ENCODE measurements at regions of chr4 and their contacts with region 1.

Region 1: DNA sequence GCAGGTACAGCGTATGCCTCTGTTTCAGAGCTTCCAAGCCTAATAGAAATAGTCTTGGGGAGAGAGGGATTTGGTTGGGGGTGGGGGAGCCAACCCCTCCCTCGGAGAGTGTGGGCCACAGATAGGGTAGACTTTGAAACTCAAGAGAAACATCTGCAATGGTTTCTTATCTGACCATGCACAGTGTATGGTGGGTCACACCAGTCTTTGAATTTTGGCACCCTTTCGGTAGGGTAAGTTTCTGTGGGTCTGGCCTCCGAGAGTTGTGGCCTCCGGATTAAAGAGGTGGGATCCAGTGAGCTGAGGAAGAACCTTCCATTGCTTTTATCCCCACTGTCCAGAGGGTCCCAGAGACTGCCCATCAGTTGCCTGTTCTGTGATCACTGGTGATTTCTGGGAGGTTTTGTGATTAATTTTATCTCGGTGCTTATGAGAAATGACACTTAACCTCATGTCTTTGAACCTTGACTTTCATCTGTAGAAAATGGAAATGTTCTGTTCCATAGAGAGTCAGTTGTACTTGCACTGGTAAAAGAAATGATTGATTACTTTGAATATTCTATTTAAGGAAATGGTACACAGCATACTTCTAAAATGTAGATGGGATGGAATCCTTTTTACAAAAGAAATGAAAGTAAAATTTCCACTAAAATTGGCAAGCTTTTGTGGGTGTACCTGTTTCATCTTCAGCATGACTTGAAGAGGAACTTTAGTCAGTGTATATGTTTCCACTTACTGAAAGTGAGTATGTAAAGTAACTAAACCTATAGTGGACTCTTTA is 62.7 kb downstream of the TMEM131L start:
- DNase-seq: no peak
- ATAC-seq: peak; percentile 69
- H3K4me3 Mint-ChIP-seq: peak overlapping the region; percentile 57
- H3K27ac Mint-ChIP-seq: peak overlapping the region; percentile 100
- H3K4me1 Mint-ChIP-seq: peaks cover 94% of the 10 kb centered on the region
- H3K27me3 Mint-ChIP-seq: no peaks in the 10 kb centered on the region

Region 2: DNA sequence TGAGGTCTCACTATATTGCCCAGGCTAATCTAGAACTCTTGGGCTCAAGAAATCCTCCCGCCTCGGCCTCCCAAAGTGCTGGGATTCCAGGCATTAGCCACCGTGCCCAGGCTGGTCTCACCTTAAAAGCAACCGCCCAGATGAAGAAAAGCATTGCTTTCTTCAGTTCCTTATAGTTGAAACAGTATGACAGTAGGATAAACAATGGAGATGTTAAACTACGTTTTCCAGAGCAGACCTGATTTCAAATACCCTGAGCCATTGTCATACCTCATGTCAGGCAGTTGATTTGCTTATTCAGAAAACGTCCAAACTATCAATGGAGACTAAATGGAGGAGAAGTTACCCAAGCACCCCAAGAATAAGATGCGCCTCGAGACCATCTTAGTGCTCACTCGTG is 89.1 kb before region 1 on chr4:
- CTCF ChIA-PET with region 1: no interaction called
- POLR2A ChIA-PET with region 1: no interaction called
- intact Hi-C with region 1: no loop called
- DNase-seq: no peak
- ATAC-seq: no peak
- H3K4me3 Mint-ChIP-seq: peak overlapping the region; percentile 73
- H3K27ac Mint-ChIP-seq: peak overlapping the region; percentile 91
- H3K4me1 Mint-ChIP-seq: peaks cover 33% of the 10 kb centered on the region
- H3K27me3 Mint-ChIP-seq: no peaks in the 10 kb centered on the region

Region 3: DNA sequence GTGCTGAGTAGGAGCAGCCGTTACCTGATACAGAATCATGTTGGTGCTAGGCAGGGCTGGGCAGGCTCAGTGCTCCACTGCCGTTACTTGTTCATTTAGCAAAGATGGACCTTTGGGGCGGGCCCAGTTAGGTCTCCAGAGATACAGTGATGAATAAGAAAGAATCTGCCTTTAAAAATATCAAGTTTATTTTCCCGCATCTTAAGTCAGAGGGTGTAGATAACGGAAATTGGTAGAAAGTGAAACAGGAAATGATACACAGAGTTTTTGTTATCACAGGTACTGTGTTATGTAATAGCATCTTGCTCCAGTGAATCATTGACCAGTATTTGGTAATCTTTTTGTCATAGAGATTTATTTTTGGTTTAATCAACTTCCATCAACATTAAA is 57.2 kb before region 1 on chr4:
- CTCF ChIA-PET with region 1: interaction called, 13 read pairs
- POLR2A ChIA-PET with region 1: interaction called, 5 read pairs
- intact Hi-C with region 1: loop called in 1 of 2 experiments (anchors 1 kb)
- DNase-seq: peak; percentile 71
- ATAC-seq: peak; percentile 61
- H3K4me3 Mint-ChIP-seq: peak overlapping the region; percentile 94
- H3K27ac Mint-ChIP-seq: peak overlapping the region; percentile 90
- H3K4me1 Mint-ChIP-seq: peaks cover 66% of the 10 kb centered on the region
- H3K27me3 Mint-ChIP-seq: no peaks in the 10 kb centered on the region

Region 4: DNA sequence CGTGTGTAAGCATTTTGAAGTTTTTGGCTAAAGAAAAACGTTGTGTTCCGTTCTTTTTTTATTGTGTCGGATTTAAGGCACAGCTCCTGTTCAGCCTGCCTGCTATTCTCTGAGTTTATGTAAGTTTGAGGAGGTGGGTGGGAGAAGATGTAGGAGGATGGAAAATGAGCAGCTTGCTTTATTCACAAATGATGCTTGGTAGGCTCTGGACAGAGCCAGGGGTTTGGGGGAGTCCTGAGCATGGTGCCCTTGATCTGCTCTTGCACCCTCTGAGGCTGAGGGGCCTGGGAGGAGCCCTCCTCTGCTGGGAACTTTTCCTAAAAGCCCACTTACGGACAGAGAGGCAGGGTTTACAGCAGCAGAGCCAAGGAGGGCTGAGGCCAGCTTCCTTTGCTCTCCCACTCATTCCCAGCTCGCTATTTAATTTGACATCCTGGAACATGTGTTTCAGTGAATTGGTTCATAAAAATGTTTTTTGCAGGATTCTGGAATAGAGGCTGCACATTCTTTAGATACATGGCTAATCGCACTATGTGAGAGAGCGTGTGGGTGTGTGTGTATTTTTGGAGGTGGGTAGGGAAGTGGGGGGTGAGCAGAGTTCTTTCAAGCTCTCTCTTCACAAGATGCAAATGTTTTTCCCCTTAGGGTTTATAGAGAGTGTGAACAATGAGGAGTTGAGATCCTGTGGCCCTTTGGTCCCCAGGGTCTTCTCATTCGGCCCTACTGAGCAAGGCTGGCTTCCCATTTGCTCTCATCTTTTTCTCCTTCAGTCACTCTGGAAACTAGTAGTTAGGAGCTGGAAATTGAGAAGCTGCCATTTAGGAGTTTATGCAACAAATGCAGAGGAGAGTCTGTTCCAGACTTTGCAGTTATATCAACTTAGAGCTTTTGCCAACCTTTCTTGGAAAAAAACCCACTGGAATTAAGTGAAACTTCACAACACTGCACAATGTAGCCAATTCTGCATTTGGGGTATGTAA is 30.6 kb before region 1 on chr4:
- CTCF ChIA-PET with region 1: interaction called, 16 read pairs
- POLR2A ChIA-PET with region 1: interaction called, 25 read pairs
- intact Hi-C with region 1: loop called in 1 of 2 experiments (anchors 1 kb)
- DNase-seq: no peak
- ATAC-seq: peak; percentile 14
- H3K4me3 Mint-ChIP-seq: peak overlapping the region; percentile 75
- H3K27ac Mint-ChIP-seq: peak overlapping the region; percentile 99
- H3K4me1 Mint-ChIP-seq: peaks cover 95% of the 10 kb centered on the region
- H3K27me3 Mint-ChIP-seq: no peaks in the 10 kb centered on the region

Region 5: GRCh38 chr4:153541456-153542096 is 12.7 kb after region 1 on chr4:
- CTCF ChIA-PET with region 1: interaction called, 31 read pairs
- POLR2A ChIA-PET with region 1: no interaction called
- intact Hi-C with region 1: loop called (anchors 1 kb)
- DNase-seq: peak; percentile 62
- ATAC-seq: peak; percentile 89
- H3K4me3 Mint-ChIP-seq: no peak overlapping the region
- H3K27ac Mint-ChIP-seq: peak overlapping the region; percentile 44
- H3K4me1 Mint-ChIP-seq: peaks cover 79% of the 10 kb centered on the region
- H3K27me3 Mint-ChIP-seq: no peaks in the 10 kb centered on the region

Region 6: DNA sequence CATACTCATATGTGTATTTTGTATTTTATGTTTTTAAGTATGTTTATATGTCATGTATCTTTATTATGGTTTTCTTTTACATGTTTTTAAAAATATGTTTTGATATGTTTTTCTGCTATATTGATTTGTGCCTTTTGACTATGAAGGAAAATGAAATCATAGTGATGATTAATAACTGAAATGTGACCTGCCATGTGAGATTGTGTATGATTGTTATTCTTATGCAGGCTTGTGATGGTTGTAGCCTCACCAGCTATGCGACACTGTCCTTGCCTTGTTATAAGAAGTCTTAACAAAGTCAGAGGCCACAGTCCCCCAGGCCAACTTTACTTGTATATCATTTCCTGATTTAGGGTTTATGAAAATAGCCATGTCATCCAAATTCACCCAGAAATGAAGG is 20.5 kb after region 1 on chr4:
- CTCF ChIA-PET with region 1: interaction called, 19 read pairs
- POLR2A ChIA-PET with region 1: interaction called, 3 read pairs
- intact Hi-C with region 1: loop called (anchors 1 to 2 kb)
- DNase-seq: peak; percentile 46
- ATAC-seq: peak; percentile 92
- H3K4me3 Mint-ChIP-seq: no peak overlapping the region
- H3K27ac Mint-ChIP-seq: peak overlapping the region; percentile 47
- H3K4me1 Mint-ChIP-seq: peaks cover 50% of the 10 kb centered on the region
- H3K27me3 Mint-ChIP-seq: no peaks in the 10 kb centered on the region

Region 7: GRCh38 chr4:153573881-153574802 is 45.2 kb after region 1 on chr4:
- CTCF ChIA-PET with region 1: interaction called, 8 read pairs
- POLR2A ChIA-PET with region 1: interaction called, 4 read pairs
- intact Hi-C with region 1: loop called (anchors 2 to 5 kb)
- DNase-seq: peak; percentile 77
- ATAC-seq: peak; percentile 87
- H3K4me3 Mint-ChIP-seq: no peak overlapping the region
- H3K27ac Mint-ChIP-seq: peak overlapping the region; percentile 39
- H3K4me1 Mint-ChIP-seq: peaks cover 78% of the 10 kb centered on the region
- H3K27me3 Mint-ChIP-seq: no peaks in the 10 kb centered on the region

Measured in activated CD4-positive, alpha-beta T cell treated with anti-CD3 and anti-CD28 coated beads for 36 hours (primary cell).